ENCODE measurements at regions of chr20 and their contacts with region 1.

Region 1: GRCh38 chr20:49245921-49246740 is 26.9 kb downstream of the DDX27 start:
- DNase-seq: peak; percentile 62
- H3K4me3 Mint-ChIP-seq: no peak overlapping the region
- H3K27ac Mint-ChIP-seq: no peak overlapping the region
- H3K4me1 Mint-ChIP-seq: no peaks in the 10 kb centered on the region
- H3K27me3 Mint-ChIP-seq: no peaks in the 10 kb centered on the region
- CTCF ChIP-seq: peak; percentile 52

Region 2: GRCh38 chr20:49156481-49156880 is 89.7 kb before region 1 on chr20:
- CTCF ChIA-PET with region 1: no interaction called
- POLR2A ChIA-PET with region 1: no interaction called
- intact Hi-C with region 1: no loop called
- DNase-seq: no peak
- H3K4me3 Mint-ChIP-seq: no peak overlapping the region
- H3K27ac Mint-ChIP-seq: no peak overlapping the region
- H3K4me1 Mint-ChIP-seq: peaks cover 8% of the 10 kb centered on the region
- H3K27me3 Mint-ChIP-seq: no peaks in the 10 kb centered on the region
- CTCF ChIP-seq: no peak

Region 3: DNA sequence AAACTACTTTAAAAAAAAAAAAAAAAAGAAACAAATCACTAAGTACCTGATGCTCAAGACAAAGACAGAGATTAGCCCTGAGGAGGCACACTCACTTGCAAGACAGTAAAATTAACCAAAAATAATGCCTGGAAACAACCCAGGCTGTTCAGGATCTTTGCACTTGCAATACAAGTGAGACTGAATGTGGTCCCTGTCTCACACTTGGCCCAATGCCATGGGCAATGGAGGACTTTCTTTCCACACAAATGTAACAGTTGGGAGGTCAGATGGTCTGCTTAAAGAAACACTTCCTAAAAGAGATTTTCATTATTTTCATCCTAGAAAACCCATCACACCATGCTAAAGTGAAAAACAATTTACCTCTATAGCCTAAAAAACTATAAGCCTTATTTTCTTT is 74.2 kb before region 1 on chr20:
- CTCF ChIA-PET with region 1: no interaction called
- POLR2A ChIA-PET with region 1: no interaction called
- intact Hi-C with region 1: no loop called
- DNase-seq: no peak
- H3K4me3 Mint-ChIP-seq: no peak overlapping the region
- H3K27ac Mint-ChIP-seq: no peak overlapping the region
- H3K4me1 Mint-ChIP-seq: peaks cover 6% of the 10 kb centered on the region
- H3K27me3 Mint-ChIP-seq: no peaks in the 10 kb centered on the region
- CTCF ChIP-seq: no peak

Region 4: GRCh38 chr20:49256261-49256660 is 10.1 kb after region 1 on chr20:
- CTCF ChIA-PET with region 1: interaction called, 10 read pairs
- POLR2A ChIA-PET with region 1: interaction called, 33 read pairs
- intact Hi-C with region 1: no loop called
- DNase-seq: no peak
- H3K4me3 Mint-ChIP-seq: no peak overlapping the region
- H3K27ac Mint-ChIP-seq: no peak overlapping the region
- H3K4me1 Mint-ChIP-seq: no peaks in the 10 kb centered on the region
- H3K27me3 Mint-ChIP-seq: no peaks in the 10 kb centered on the region
- CTCF ChIP-seq: no peak

Region 5: DNA sequence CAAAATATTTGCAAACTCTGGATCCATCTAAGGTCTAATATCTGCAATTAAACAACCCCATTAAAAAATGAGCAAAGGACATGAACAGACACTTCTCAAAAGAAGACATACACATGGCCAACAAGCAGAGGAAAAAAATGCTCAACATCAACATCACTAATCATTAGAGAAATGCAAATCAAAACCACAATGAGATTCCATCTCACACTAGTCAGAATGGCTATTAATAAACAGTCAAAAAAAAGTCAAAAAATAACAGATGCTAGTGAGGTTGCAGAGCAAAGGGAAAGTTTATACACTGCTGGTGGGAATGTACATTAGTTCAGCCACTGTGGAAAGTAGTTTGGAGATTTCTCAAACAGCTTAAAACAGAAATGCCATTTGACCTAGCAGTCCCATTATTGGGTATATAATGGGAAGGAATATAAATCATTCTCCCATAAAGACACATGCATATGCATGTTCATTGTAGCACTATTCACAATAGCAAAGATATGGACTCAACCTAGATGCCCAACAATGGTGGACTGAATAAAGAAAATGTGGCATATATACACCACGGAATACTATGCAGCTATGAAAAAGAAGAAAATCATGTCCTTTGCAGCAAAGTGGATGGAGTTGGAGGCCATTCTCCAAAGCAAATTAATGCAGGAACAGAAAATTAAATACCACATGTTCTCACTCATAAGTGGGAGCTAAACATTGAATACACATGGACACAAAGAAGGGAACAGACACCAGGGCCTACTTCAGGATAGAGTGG is 22.7 kb after region 1 on chr20:
- CTCF ChIA-PET with region 1: interaction called, 13 read pairs
- POLR2A ChIA-PET with region 1: interaction called, 6 read pairs
- intact Hi-C with region 1: no loop called
- DNase-seq: no peak
- H3K4me3 Mint-ChIP-seq: peak overlapping the region; percentile 61
- H3K27ac Mint-ChIP-seq: no peak overlapping the region
- H3K4me1 Mint-ChIP-seq: peaks cover 34% of the 10 kb centered on the region
- H3K27me3 Mint-ChIP-seq: no peaks in the 10 kb centered on the region
- CTCF ChIP-seq: no peak

Region 6: GRCh38 chr20:49278036-49278817 is 32.1 kb after region 1 on chr20 and contains the start of gene ZNFX1:
- CTCF ChIA-PET with region 1: interaction called, 4 read pairs
- POLR2A ChIA-PET with region 1: interaction called, 11 read pairs
- intact Hi-C with region 1: loop called (anchors 2 kb)
- DNase-seq: peak; percentile 99
- H3K4me3 Mint-ChIP-seq: peak within 1 kb of the TSS; percentile 81
- H3K27ac Mint-ChIP-seq: peak within 1 kb of the TSS; percentile 96
- H3K4me1 Mint-ChIP-seq: peaks cover 50% of the 10 kb centered on the region
- H3K27me3 Mint-ChIP-seq: no peaks in the 10 kb centered on the region
- CTCF ChIP-seq: no peak
- total RNA-seq, gene ZNFX1: 24.3 and 26.8 TPM in 2 replicates

Region 7: GRCh38 chr20:49323622-49324238 is 77.6 kb after region 1 on chr20:
- CTCF ChIA-PET with region 1: interaction called, 3 read pairs
- POLR2A ChIA-PET with region 1: interaction called, 3 read pairs
- intact Hi-C with region 1: loop called (anchors 1 kb)
- DNase-seq: peak; percentile 76
- H3K4me3 Mint-ChIP-seq: no peak overlapping the region
- H3K27ac Mint-ChIP-seq: no peak overlapping the region
- H3K4me1 Mint-ChIP-seq: no peaks in the 10 kb centered on the region
- H3K27me3 Mint-ChIP-seq: peaks cover 7% of the 10 kb centered on the region
- CTCF ChIP-seq: peak; percentile 35

Region 8: GRCh38 chr20:49534255-49534712 is 288.2 kb after region 1 on chr20:
- CTCF ChIA-PET with region 1: interaction called, 3 read pairs
- POLR2A ChIA-PET with region 1: no interaction called
- intact Hi-C with region 1: loop called (anchors 1 kb)
- DNase-seq: peak; percentile 74
- H3K4me3 Mint-ChIP-seq: no peak overlapping the region
- H3K27ac Mint-ChIP-seq: no peak overlapping the region
- H3K4me1 Mint-ChIP-seq: peaks cover 4% of the 10 kb centered on the region
- H3K27me3 Mint-ChIP-seq: no peaks in the 10 kb centered on the region
- CTCF ChIP-seq: peak; percentile 87

Measured in MCF 10A (cell line).